Endothelial cell of umbilical vein (primary cell): ENCODE measurements at regions of chr14 and their contacts with region 1.

Region 1: DNA sequence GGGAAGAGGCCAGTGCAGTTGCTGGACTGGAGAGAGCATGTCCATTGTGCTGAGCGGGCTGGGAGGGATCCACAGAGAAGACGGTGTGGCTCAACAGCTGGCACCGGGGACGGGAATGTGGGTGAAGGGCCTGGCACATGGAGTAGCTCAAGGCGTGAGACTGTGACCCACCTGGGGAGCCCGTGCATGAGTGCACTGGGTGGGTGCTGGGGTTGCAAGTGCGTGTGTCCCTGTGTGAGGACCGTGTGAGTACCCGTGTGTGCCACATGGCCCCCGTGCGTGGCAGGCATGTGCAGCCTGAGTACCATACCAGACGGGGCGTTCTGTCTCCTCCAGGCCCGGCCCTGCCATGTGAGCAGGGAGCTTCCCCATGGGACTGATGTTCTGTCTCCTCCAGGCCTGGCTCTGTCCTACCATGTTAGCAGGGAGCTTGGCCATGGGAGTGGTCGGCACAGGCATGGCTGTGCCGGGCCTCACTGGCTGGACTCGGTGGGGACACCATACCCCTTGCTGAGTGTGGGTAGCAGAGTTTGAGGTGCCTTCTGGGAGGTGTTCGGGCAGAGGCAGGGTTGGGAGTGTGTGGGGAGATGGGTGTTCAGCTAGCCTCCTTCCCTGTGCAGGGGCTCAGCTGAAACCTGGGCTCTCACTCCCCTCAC is 234.4 kb downstream of the TMEM121 start:
- DNase-seq: no peak
- H3K4me3 ChIP-seq: no peak overlapping the region
- H3K27ac ChIP-seq: no peak overlapping the region
- H3K4me1 ChIP-seq: no peaks in the 10 kb centered on the region
- H3K27me3 ChIP-seq: no peaks in the 10 kb centered on the region
- CTCF ChIP-seq: no peak
- POLR2A ChIP-seq: no peak

Region 2: GRCh38 chr14:105314287-105315200 is 446.3 kb before region 1 on chr14 and contains the start of gene PACS2:
- CTCF ChIA-PET with region 1: no interaction called
- POLR2A ChIA-PET with region 1: no interaction called
- dilution Hi-C with region 1: no loop called
- intact Hi-C with region 1: no loop called
- DNase-seq: peak; percentile 58
- H3K4me3 ChIP-seq: peak within 1 kb of the TSS; percentile 3 to 61 (median 49)
- H3K27ac ChIP-seq: no peak within 1 kb of the TSS
- H3K4me1 ChIP-seq: peaks cover 8% of the 10 kb centered on the region
- H3K27me3 ChIP-seq: no peaks in the 10 kb centered on the region
- CTCF ChIP-seq: no peak
- POLR2A ChIP-seq: no peak
- total RNA-seq, gene PACS2: 80.1 and 86.3 TPM in 2 replicates

Region 3: DNA sequence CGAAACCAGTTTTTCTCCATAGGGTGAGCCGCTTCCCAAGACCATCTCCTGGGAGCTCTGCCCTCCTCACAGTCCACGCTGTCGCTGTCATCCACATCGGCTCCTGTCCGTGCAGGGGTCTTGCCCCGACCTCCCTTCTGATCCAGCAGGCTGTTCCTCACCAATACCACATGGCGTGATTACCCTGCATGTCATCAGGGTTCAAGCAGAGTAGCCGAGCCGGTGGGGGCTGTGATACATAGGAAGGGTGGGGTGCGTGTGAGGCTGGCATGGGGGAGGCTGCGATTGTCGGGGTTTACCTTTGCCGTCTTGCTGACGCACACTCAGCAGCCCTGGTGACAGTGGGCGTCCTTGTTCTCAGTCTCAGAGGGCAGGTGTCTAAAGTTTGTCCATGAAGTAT is 252.8 kb before region 1 on chr14:
- CTCF ChIA-PET with region 1: no interaction called
- POLR2A ChIA-PET with region 1: no interaction called
- dilution Hi-C with region 1: no loop called
- intact Hi-C with region 1: no loop called
- DNase-seq: no peak
- H3K4me3 ChIP-seq: no peak overlapping the region
- H3K27ac ChIP-seq: no peak overlapping the region
- H3K4me1 ChIP-seq: no peaks in the 10 kb centered on the region
- H3K27me3 ChIP-seq: no peaks in the 10 kb centered on the region
- CTCF ChIP-seq: no peak
- POLR2A ChIP-seq: no peak

Region 4: DNA sequence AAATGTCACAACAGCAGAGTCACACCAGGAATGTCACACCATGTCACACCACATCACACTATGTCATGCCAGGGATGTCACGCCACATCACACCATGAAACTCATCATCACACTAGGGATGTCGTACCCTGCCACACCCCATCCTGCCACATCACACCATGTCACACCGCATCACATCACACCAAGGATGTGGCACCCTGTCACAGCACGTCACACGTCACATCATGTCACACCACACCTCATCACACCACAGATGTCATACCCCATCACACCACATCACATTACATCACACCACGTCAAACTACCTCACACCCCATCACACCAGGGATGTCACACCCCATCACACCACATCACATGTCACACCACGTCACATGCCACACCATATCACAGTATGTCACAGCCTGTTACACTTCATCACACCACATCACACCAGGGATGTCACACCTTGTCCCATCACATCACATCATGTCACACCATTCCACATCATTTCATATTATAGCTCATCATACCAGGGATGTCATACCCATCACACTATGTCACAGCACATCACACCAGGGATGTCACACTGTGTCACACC is 143.5 kb before region 1 on chr14:
- CTCF ChIA-PET with region 1: no interaction called
- POLR2A ChIA-PET with region 1: no interaction called
- dilution Hi-C with region 1: no loop called
- intact Hi-C with region 1: loop called (anchors 2 kb)
- DNase-seq: no peak
- H3K4me3 ChIP-seq: no peak overlapping the region
- H3K27ac ChIP-seq: no peak overlapping the region
- H3K4me1 ChIP-seq: no peaks in the 10 kb centered on the region
- H3K27me3 ChIP-seq: no peaks in the 10 kb centered on the region
- CTCF ChIP-seq: no peak
- POLR2A ChIP-seq: no peak